GM12878 (cell line): ENCODE measurements at regions of chr5 and their contacts with region 1.

Region 1: GRCh38 chr5:35003018-35003957 is 44.5 kb downstream of the AGXT2 start:
- DNase-seq: peak; percentile 9
- ATAC-seq: peak; percentile 91
- H3K4me3 ChIP-seq: no peak overlapping the region
- H3K27ac ChIP-seq: no peak overlapping the region
- H3K4me1 ChIP-seq: 0 out of 2 replicates have a peak, but pooled peaks cover 5% of the 10 kb centered on the region
- H3K27me3 ChIP-seq: no peaks in the 10 kb centered on the region
- CTCF ChIP-seq: peak; percentile 84 to 93 (median 91); a peak in 5 of 6 replicates
- EP300 ChIP-seq: no peak
- POLR2A ChIP-seq: no peak
- RAD21 ChIP-seq: peak; percentile 91

Region 2: GRCh38 chr5:34486160-34486848 is 517.0 kb before region 1 on chr5:
- CTCF ChIA-PET with region 1: interaction called, 17 read pairs
- POLR2A ChIA-PET with region 1: no interaction called
- RAD21 ChIA-PET with region 1: interaction called, 4 read pairs
- SMC1A ChIA-PET with region 1: no interaction called
- in situ Hi-C with region 1: no loop called
- intact Hi-C with region 1: loop called (anchors 10 kb)
- DNase-seq: no peak
- ATAC-seq: peak; percentile 83
- H3K4me3 ChIP-seq: no peak overlapping the region
- H3K27ac ChIP-seq: no peak overlapping the region
- H3K4me1 ChIP-seq: no peaks in the 10 kb centered on the region
- H3K27me3 ChIP-seq: no peaks in the 10 kb centered on the region; a peak in 1 of 4 replicates
- CTCF ChIP-seq: peak; percentile 74 to 92 (median 80)
- EP300 ChIP-seq: no peak
- POLR2A ChIP-seq: no peak
- RAD21 ChIP-seq: peak; percentile 97

Region 3: DNA sequence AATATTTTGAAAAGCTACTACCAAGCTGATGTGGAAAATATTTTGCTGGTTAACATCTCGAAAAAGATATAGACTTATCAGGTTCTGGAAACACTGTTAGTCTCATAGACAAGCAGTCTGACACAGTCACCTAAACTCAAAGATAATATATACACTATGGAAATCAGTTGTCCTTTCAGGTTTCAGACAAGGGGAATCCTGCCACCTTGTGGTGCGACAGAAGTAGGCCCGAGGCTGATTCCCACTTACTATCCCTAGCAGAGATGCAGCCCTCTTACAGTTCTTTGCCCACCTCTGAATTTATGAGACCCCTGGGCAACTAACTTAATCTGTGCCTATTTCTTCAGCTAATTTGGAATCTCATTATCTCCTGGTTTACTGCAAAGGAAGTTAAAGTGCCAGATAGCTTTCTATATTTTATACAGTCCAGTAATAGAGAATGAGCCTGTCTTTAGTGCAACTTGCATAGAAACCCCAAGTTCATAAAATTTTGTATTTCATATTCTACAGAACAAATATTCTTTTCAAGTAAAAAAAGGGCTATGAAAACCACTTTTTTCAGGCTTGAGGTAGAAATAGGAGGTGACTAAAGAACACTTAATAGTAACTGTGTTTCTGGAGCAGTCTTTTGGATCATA is 104.9 kb before region 1 on chr5:
- CTCF ChIA-PET with region 1: interaction called, 13 read pairs
- POLR2A ChIA-PET with region 1: no interaction called
- RAD21 ChIA-PET with region 1: interaction called, 8 read pairs
- SMC1A ChIA-PET with region 1: interaction called, 6 read pairs
- in situ Hi-C with region 1: no loop called
- intact Hi-C with region 1: no loop called
- DNase-seq: no peak
- ATAC-seq: peak; percentile 94
- H3K4me3 ChIP-seq: no peak overlapping the region
- H3K27ac ChIP-seq: no peak overlapping the region
- H3K4me1 ChIP-seq: no peaks in the 10 kb centered on the region
- H3K27me3 ChIP-seq: no peaks in the 10 kb centered on the region
- CTCF ChIP-seq: peak; percentile 77 to 82 (median 79)
- EP300 ChIP-seq: no peak
- POLR2A ChIP-seq: no peak
- RAD21 ChIP-seq: peak; percentile 90

Region 4: DNA sequence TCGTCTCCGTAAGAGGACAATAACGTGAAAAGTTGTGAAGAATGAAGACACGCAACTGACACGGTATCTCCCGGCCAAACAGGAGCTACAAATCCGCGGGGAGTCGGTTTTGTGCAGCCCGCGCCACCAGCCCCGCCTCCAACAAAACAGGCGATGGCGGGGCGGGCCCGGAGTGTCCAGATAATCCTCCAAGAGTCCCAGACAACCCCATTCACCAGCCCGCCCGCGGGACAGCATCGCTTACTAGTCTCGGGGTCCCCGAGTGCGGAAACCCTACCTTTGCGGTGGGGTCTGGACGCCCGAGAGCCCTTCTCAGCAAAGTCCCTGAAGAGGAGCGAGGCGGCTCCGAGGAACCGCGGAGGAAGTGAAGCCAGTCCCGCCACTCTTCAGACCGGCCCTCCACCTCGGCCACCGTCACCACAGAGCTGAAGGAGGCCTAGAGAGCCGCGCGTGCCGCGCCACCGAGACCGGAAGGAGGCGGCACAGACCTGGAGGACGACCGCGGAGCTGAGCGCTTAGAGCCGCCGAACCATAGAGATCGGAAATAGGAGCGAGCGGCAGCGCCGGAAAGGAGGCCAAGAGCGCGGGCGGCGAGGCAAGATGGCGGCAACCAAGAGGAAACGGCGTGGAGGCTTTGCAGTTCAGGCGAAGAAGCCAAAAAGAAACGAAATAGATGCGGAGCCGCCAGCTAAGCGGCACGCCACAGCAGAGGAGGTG is 88.0 kb before region 1 on chr5 and contains the starts of genes BRIX1 and RAD1:
- CTCF ChIA-PET with region 1: interaction called, 12 read pairs
- POLR2A ChIA-PET with region 1: no interaction called
- RAD21 ChIA-PET with region 1: interaction called, 9 read pairs
- SMC1A ChIA-PET with region 1: interaction called, 27 read pairs
- in situ Hi-C with region 1: no loop called
- intact Hi-C with region 1: loop called (anchors 5 kb)
- DNase-seq: peak; percentile 86
- ATAC-seq: peak; percentile 96
- H3K4me3 ChIP-seq: peak within 1 kb of the TSS; percentile 100
- H3K27ac ChIP-seq: peak within 1 kb of the TSS; percentile 90
- H3K4me1 ChIP-seq: peaks cover 6% of the 10 kb centered on the region; the same call in 1 of the 2 replicates
- H3K27me3 ChIP-seq: no peaks in the 10 kb centered on the region
- CTCF ChIP-seq: peak in 2 of 3 experiments; percentile 12 to 43; a peak in 3 of 6 replicates
- EP300 ChIP-seq: 0 out of 4 replicates have a peak, but pooled peaks of 1 of the 2 experiments have one; percentile 35
- POLR2A ChIP-seq: peak; percentile 90
- RAD21 ChIP-seq: no peak
- polyA plus RNA-seq, gene BRIX1: 58.2 to 77.4 TPM
- polyA plus RNA-seq, gene RAD1: 43.4 to 58.4 TPM

Region 5: GRCh38 chr5:34957857-34958690 is 45.2 kb before region 1 on chr5:
- CTCF ChIA-PET with region 1: interaction called, 185 read pairs
- POLR2A ChIA-PET with region 1: no interaction called
- RAD21 ChIA-PET with region 1: interaction called, 123 read pairs
- SMC1A ChIA-PET with region 1: interaction called, 121 read pairs
- in situ Hi-C with region 1: no loop called
- intact Hi-C with region 1: loop called (anchors 1 kb)
- DNase-seq: no peak
- ATAC-seq: peak; percentile 90
- H3K4me3 ChIP-seq: no peak overlapping the region
- H3K27ac ChIP-seq: no peak overlapping the region
- H3K4me1 ChIP-seq: peaks cover 11% of the 10 kb centered on the region; the same call in 1 of the 2 replicates
- H3K27me3 ChIP-seq: no peaks in the 10 kb centered on the region
- CTCF ChIP-seq: peak; percentile 59 to 72 (median 70)
- EP300 ChIP-seq: no peak
- POLR2A ChIP-seq: no peak
- RAD21 ChIP-seq: peak; percentile 49

Region 6: DNA sequence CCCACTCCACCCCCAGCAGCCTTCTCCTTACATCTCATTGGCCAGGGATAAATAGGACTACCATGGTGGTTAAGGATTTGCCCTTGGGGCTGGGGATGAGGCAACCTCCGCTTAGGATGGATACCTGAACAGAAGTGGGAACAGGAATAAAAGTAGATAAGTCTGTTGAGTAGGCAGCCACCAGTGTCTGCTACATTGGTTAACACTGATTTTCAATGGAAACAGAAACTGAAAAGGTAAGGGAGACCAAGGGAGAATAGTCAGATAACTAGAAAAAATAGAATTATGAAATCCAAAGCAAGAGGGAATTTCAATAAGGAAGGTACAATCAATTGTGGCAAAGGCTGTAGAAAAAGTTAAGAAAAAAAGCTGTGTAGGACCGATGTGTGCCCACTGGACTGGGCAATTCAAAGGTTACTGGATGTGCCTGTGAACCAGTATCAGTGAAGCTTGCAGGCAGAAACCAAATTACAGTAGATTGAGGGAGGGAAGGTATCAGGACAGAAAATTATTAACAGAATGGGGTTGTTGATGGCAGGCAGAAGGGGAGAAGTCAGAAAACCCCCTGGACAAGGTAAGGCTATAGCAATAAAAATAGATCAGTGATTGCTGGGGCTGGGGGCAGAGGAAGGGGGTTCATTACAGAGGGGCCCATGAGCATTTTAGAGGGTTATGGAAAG is 25.2 kb before region 1 on chr5:
- CTCF ChIA-PET with region 1: interaction called, 13 read pairs
- POLR2A ChIA-PET with region 1: interaction called, 4 read pairs
- RAD21 ChIA-PET with region 1: interaction called, 7 read pairs
- SMC1A ChIA-PET with region 1: interaction called, 7 read pairs
- in situ Hi-C with region 1: no loop called
- intact Hi-C with region 1: no loop called
- DNase-seq: peak; percentile 35
- ATAC-seq: peak; percentile 96
- H3K4me3 ChIP-seq: no peak overlapping the region
- H3K27ac ChIP-seq: no peak overlapping the region
- H3K4me1 ChIP-seq: no peaks in the 10 kb centered on the region
- H3K27me3 ChIP-seq: no peaks in the 10 kb centered on the region
- CTCF ChIP-seq: no peak
- EP300 ChIP-seq: peak; percentile 22 to 25; a peak in 1 of 4 replicates
- POLR2A ChIP-seq: no peak
- RAD21 ChIP-seq: no peak

Region 7: DNA sequence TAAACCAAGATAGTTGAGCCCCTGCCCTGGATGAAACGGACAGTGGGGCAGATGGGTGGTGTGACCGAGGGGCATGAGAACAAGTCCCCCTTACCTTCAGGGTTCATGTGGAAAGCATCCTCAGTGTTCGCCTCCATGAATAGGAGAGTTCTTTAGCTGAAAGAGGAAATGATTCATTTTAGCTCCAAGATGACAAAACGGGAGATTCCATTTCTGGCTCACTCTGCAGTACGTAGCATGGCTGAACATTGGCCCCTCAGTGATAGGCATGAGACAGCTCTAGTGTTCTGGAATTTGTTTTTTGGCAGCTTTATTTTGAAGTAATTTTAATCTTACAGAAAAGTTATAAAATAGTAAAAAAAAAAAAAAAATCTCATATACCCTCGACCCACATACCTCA is 114.7 kb after region 1 on chr5:
- CTCF ChIA-PET with region 1: no interaction called
- POLR2A ChIA-PET with region 1: no interaction called
- RAD21 ChIA-PET with region 1: no interaction called
- SMC1A ChIA-PET with region 1: no interaction called
- in situ Hi-C with region 1: no loop called
- intact Hi-C with region 1: no loop called
- DNase-seq: no peak
- ATAC-seq: peak; percentile 93
- H3K4me3 ChIP-seq: no peak overlapping the region
- H3K27ac ChIP-seq: no peak overlapping the region
- H3K4me1 ChIP-seq: no peaks in the 10 kb centered on the region
- H3K27me3 ChIP-seq: no peaks in the 10 kb centered on the region
- CTCF ChIP-seq: no peak
- EP300 ChIP-seq: peak in 1 of 2 experiments; percentile 33; a peak in 1 of 4 replicates
- POLR2A ChIP-seq: no peak
- RAD21 ChIP-seq: no peak